HEK293 (cell line): ENCODE measurements at regions of chr1 and their contacts with region 1.

Region 1: GRCh38 chr1:33295450-33296081 is 25.3 kb downstream of the A3GALT2 start:
- H3K4me3 ChIP-seq: no peak overlapping the region
- H3K27ac ChIP-seq: no peak overlapping the region
- H3K4me1 ChIP-seq: no peaks in the 10 kb centered on the region
- CTCF ChIP-seq: peak; percentile 85

Region 2: DNA sequence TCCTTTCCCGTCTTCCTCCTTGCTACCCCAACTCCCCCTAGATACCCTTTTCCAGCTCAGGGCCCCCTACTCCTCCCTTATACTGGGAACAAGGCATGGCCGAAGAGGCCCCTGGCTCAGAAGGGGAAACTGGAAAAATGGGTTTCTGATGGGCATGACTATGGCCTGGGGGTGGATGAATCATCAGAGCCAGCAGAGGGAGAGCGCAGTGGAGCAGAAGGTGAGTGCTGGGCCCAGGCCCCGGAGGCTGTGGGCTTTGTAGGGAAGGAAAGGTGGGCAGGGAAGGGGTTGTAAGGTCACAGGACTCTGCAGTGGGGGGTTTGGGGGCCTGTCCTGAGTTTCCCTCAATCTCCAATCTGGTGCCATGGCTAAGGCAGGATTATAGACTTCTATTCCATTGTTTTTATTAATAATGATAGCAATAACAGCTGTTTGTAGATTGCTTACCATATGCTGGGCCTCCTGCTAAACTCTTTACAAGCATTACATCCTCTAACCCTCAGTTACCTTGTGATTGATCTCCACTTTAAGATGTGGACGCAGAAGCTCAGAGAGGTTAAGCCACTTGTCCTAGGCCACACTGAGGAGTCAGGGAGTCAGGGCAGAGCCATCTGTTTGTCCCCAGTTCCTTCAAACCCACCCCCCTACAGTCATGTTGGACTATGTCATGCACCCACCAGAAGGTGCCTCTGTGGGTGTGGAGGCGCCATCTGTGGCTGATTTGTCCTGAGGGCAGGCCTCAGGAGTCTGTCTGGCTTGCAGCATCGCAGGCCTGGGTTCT is 75.5 kb before region 1 on chr1:
- CTCF ChIA-PET with region 1: interaction called, 14 read pairs
- POLR2A ChIA-PET with region 1: no interaction called
- H3K4me3 ChIP-seq: no peak overlapping the region
- H3K27ac ChIP-seq: no peak overlapping the region
- H3K4me1 ChIP-seq: no peaks in the 10 kb centered on the region
- CTCF ChIP-seq: no peak

Region 3: GRCh38 chr1:33312413-33312749 is 16.8 kb after region 1 on chr1:
- CTCF ChIA-PET with region 1: interaction called, 15 read pairs
- POLR2A ChIA-PET with region 1: no interaction called
- H3K4me3 ChIP-seq: no peak overlapping the region
- H3K27ac ChIP-seq: no peak overlapping the region
- H3K4me1 ChIP-seq: no peaks in the 10 kb centered on the region
- CTCF ChIP-seq: no peak

Region 4: DNA sequence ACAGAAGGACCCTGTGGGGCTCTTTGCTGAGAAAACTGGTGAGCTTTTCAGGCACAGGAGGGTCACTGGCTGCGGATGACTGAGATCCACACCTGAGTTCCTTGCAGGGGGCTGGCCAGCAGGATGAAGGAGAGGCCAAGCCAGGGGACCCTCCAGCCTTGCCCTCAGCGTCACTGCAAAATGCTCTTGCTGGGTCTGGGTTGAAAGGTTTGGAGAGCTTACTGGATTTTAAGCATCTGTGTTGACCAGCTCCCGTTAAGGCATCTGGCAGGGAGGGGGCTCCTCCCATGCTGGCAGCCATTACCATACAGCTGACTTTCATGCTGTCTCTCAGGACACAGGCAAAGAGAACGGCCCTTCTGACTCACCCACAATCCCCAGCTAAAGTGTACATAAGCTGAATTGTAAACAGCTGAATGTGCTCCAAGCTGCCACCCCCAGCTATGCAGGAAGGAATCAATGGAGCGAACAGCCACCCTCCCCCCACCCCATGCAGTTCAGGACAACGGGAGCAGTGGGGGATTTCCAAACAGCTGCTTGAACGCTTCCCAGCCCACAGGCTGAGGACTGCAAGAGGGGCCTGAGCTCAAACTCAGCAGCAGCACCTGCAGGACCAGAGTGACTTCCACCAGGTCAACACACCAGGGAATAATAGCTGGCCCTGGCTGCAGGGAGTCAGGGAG is 46.6 kb after region 1 on chr1:
- CTCF ChIA-PET with region 1: interaction called, 13 read pairs
- POLR2A ChIA-PET with region 1: interaction called, 4 read pairs
- H3K4me3 ChIP-seq: no peak overlapping the region
- H3K27ac ChIP-seq: peak overlapping the region; percentile 26; the same call in 1 of the 2 replicates
- H3K4me1 ChIP-seq: peaks cover 28% of the 10 kb centered on the region
- CTCF ChIP-seq: no peak

Region 5: DNA sequence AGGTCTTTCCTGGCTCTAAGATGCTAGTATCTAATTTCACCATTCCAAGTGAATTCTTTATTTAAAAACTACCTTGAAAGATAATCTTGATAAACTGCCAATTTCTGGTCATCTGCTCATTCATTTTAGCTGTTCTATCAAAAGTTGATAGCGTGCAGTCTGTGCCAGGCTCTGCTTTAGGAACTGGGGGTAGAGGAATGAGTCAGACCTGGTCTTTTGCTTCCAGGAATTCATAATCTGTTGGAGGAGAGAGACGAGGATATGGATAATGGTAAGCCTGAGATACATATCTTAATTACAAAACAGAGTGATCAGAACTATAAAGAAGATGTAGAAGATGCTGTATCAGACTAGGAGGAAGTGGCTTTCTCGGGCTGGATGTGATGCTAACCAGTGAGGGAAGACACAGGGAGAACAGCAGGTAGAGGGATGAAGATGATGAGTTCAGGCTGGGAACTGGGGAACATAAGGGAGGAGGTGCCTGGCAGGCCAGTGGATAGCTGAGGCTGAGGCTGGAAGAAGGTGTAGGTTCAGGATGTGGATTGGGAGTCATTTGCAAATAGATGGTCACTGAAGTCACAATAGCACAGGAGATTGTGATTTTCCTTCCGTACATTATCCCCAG is 147.6 kb after region 1 on chr1:
- CTCF ChIA-PET with region 1: interaction called, 10 read pairs
- POLR2A ChIA-PET with region 1: no interaction called
- H3K4me3 ChIP-seq: no peak overlapping the region
- H3K27ac ChIP-seq: no peak overlapping the region
- H3K4me1 ChIP-seq: no peaks in the 10 kb centered on the region
- CTCF ChIP-seq: no peak

Region 6: DNA sequence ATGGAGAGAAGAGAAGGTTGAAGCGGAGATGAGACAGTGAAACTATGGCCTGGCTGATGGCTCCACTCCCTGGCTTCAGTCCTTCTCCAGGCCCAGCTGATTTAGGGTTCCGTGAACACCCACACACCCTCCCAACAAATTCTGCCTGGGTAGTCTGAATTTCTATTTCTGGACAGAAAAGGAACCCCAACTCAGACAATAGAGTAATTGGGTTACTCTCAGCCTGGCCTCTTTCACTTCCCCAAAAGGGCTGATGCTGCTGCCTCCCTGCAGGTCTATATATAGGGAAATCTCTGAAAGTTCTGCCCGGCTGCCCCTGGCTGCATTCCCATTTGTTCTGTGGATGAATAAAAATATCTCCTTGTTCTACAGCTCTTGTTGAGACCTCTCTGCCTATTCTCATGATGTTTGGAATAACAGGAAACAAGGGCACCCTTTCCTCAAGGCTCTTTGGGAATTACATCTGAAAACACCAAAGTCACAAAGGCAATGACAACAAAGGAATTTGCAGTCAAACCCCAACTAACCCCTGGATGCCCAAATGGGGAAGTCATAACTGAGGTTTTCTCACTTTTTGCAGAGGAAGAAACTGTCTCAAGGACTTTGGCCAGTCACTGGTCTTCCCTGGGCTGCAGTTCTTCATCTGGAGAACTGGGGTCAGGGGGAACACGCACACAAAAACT is 165.5 kb after region 1 on chr1:
- CTCF ChIA-PET with region 1: interaction called, 30 read pairs
- POLR2A ChIA-PET with region 1: no interaction called
- H3K4me3 ChIP-seq: no peak overlapping the region
- H3K27ac ChIP-seq: no peak overlapping the region
- H3K4me1 ChIP-seq: no peaks in the 10 kb centered on the region
- CTCF ChIP-seq: no peak

Region 7: GRCh38 chr1:33610864-33611455 is 315.4 kb after region 1 on chr1:
- CTCF ChIA-PET with region 1: interaction called, 16 read pairs
- POLR2A ChIA-PET with region 1: no interaction called
- H3K4me3 ChIP-seq: no peak overlapping the region
- H3K27ac ChIP-seq: no peak overlapping the region
- H3K4me1 ChIP-seq: no peaks in the 10 kb centered on the region
- CTCF ChIP-seq: no peak